PC-3 (cell line): ENCODE measurements at regions of chr5 and their contacts with region 1.

Region 1: GRCh38 chr5:149035372-149035790 is 27.5 kb downstream of the SH3TC2 start:
- DNase-seq: peak; percentile 98
- ATAC-seq: peak; percentile 92
- H3K4me3 ChIP-seq: no peak overlapping the region
- H3K27ac ChIP-seq: no peak overlapping the region
- H3K4me1 ChIP-seq: peaks cover 42% of the 10 kb centered on the region
- H3K27me3 ChIP-seq: no peaks in the 10 kb centered on the region
- CTCF ChIP-seq: peak; percentile 100

Region 2: DNA sequence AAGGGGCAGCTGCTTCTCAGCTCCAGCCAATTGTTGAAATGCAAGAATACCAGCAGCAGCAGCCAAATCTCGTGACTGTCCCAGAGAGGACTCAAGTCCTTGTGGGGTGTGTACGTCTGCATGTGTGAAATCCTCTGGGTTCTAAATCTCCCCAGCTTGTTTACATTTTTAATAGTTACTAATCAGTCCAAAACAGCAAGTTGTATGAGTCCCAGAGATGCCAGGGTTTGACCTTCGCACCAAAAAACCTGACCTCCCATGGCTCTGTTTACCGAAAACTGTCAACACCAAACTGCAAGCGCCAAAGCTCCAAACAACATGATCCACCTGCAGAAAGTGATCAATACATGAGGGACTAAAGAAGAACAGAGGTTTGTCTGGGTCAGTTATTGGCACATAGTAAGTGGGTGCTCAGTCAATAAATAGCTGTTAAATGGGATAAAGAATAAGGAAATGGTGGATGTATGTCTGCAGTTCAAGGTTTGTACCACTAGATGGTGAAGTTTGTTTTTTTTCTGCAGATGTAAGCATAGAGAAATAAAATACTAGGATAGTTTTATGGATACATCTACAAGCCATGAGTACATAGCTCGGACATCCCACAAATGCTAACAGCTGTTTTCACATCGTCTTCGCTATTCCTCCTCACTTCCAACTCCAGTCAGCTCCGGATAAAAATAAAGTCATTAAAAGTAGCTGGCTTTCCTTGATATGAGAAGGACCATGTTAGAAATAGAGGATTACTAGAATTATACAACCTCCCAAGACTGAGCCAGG is 294.2 kb before region 1 on chr5:
- CTCF ChIA-PET with region 1: interaction called, 33 read pairs
- POLR2A ChIA-PET with region 1: no interaction called
- intact Hi-C with region 1: loop called (anchors 1 kb)
- DNase-seq: peak; percentile 96
- ATAC-seq: peak; percentile 92
- H3K4me3 ChIP-seq: peak overlapping the region; percentile 4; the same call in 1 of the 2 replicates
- H3K27ac ChIP-seq: no peak overlapping the region
- H3K4me1 ChIP-seq: peaks cover 5% of the 10 kb centered on the region
- H3K27me3 ChIP-seq: no peaks in the 10 kb centered on the region
- CTCF ChIP-seq: peak; percentile 99

Region 3: GRCh38 chr5:148912714-148913398 is 122.5 kb before region 1 on chr5:
- CTCF ChIA-PET with region 1: interaction called, 12 read pairs
- POLR2A ChIA-PET with region 1: interaction called, 5 read pairs
- intact Hi-C with region 1: loop called (anchors 1 kb)
- DNase-seq: peak; percentile 100
- ATAC-seq: peak; percentile 62
- H3K4me3 ChIP-seq: peak overlapping the region; percentile 19; the same call in 1 of the 2 replicates
- H3K27ac ChIP-seq: peak overlapping the region; percentile 88
- H3K4me1 ChIP-seq: peaks cover 80% of the 10 kb centered on the region
- H3K27me3 ChIP-seq: no peaks in the 10 kb centered on the region
- CTCF ChIP-seq: peak; percentile 97

Region 4: GRCh38 chr5:148963664-148964063 is 71.7 kb before region 1 on chr5:
- CTCF ChIA-PET with region 1: interaction called, 13 read pairs
- POLR2A ChIA-PET with region 1: no interaction called
- intact Hi-C with region 1: loop called (anchors 2 kb)
- DNase-seq: no peak
- ATAC-seq: no peak
- H3K4me3 ChIP-seq: no peak overlapping the region
- H3K27ac ChIP-seq: peak overlapping the region; percentile 79; the same call in 1 of the 2 replicates
- H3K4me1 ChIP-seq: peaks cover 81% of the 10 kb centered on the region
- H3K27me3 ChIP-seq: no peaks in the 10 kb centered on the region
- CTCF ChIP-seq: no peak

Region 5: GRCh38 chr5:149053072-149053695 is 17.8 kb after region 1 on chr5:
- CTCF ChIA-PET with region 1: interaction called, 13 read pairs
- POLR2A ChIA-PET with region 1: no interaction called
- intact Hi-C with region 1: no loop called
- DNase-seq: peak; percentile 99
- ATAC-seq: peak; percentile 93
- H3K4me3 ChIP-seq: peak overlapping the region; percentile 3; the same call in 1 of the 2 replicates
- H3K27ac ChIP-seq: peak overlapping the region; percentile 65
- H3K4me1 ChIP-seq: peaks cover 54% of the 10 kb centered on the region
- H3K27me3 ChIP-seq: no peaks in the 10 kb centered on the region
- CTCF ChIP-seq: peak; percentile 25; the same call in 1 of the 2 replicates

Region 6: GRCh38 chr5:149074106-149074505 is 38.7 kb after region 1 on chr5:
- CTCF ChIA-PET with region 1: interaction called, 4 read pairs
- POLR2A ChIA-PET with region 1: no interaction called
- intact Hi-C with region 1: loop called (anchors 1 kb)
- DNase-seq: peak; percentile 98
- ATAC-seq: peak; percentile 44
- H3K4me3 ChIP-seq: no peak overlapping the region
- H3K27ac ChIP-seq: peak overlapping the region; percentile 82
- H3K4me1 ChIP-seq: peaks cover 53% of the 10 kb centered on the region
- H3K27me3 ChIP-seq: no peaks in the 10 kb centered on the region
- CTCF ChIP-seq: no peak